Lower leg skin (tissue), 4 donors: ENCODE measurements at regions of chr1 and their contacts with region 1.

Region 1: GRCh38 chr1:88509366-88509765 is 174.7 kb upstream of the PKN2 start:
- DNase-seq: no peak
- H3K4me3 ChIP-seq: no peak overlapping the region
- CTCF ChIP-seq: no peak
- POLR2A ChIP-seq: no peak

Region 2: GRCh38 chr1:87778896-87779295 is 730.5 kb before region 1 on chr1:
- intact Hi-C with region 1: no loop called
- DNase-seq: no peak
- H3K4me3 ChIP-seq: no peak overlapping the region
- CTCF ChIP-seq: no peak
- POLR2A ChIP-seq: no peak

Region 3: DNA sequence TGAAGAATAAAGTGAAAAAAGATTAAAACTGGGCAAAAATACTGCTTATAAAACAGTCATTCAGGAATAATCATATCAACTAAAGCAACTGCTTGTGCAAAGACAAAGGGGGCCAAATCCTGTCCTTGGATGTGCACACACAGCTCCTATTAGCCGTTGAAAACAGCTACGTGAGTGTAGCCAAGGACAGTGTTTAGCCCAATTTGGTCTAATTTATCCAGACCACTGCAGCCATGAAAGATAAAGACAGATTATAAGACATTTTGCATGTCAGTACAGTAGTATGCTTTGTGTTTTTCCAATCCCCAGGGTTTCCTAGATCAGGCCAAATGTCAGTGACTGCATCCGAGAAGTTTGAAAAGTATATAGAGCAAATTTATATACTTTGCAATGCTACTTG is 28.4 kb after region 1 on chr1:
- intact Hi-C with region 1: loop called (anchors 1 kb)
- DNase-seq: no peak
- H3K4me3 ChIP-seq: no peak overlapping the region
- CTCF ChIP-seq: no peak
- POLR2A ChIP-seq: no peak

Region 4: DNA sequence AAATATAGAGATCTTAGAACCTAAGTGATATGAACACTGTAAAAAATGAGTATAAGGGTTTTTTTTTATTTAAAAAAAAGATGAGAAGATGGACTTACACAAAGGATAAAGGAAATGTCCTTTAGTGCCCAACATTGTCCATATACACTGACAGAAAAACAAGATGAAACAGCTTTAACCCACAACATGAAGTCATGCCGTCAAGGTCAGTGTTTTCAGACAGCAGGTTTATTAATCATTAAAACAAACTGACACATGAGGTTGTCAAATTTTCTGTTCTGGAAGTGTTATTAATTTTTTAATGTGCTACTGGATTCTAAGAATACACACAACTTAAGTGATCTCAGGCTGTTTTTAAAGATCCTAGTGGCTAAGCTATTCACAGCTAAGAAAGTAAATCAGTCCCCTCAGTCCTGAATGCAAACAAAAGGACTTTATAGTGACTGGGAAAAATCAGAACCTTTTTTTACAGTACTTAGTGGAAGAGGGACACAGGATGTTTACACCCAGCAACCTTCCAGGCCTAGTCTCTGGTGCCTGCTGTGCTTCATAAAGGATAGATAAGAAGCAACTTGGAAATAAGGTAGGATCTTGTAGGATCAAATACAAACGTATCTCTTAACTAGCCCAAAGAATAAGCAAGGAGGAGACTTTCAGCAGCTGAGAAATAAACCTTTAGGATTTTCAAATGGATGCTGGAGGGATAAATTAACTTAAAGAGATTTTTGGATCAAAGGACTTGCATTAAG is 152.8 kb after region 1 on chr1:
- intact Hi-C with region 1: no loop called
- DNase-seq: no peak
- H3K4me3 ChIP-seq: no peak overlapping the region
- CTCF ChIP-seq: no peak
- POLR2A ChIP-seq: no peak

Region 5: DNA sequence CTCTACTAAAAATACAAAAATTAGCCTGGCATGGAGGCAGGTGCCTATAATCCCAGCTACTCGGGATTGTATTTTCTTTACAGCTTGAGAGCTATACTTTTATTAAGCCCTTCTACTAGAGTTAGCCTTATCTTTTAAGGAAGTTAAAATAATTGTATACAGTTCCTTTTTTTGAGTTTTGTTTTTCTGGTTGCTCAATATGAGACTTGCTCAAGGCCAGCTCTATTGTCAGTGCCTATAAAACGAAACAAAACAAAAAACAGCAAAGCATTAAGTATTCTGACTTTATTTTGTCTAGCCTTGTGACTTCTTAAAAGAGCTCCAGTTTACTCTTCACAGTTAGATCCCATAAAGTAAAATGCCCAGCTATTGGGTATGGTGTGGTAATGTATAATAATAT is 191.9 kb after region 1 on chr1:
- intact Hi-C with region 1: no loop called
- DNase-seq: no peak
- H3K4me3 ChIP-seq: no peak overlapping the region
- CTCF ChIP-seq: no peak
- POLR2A ChIP-seq: no peak